ENCODE measurements at regions of chr6 and their contacts with region 1.

Region 1: GRCh38 chr6:131911951-131912350 is 39.2 kb downstream of the CCN2 start:
- DNase-seq: no peak
- H3K4me3 ChIP-seq: no peak overlapping the region
- H3K27ac ChIP-seq: no peak overlapping the region
- H3K4me1 ChIP-seq: no peaks in the 10 kb centered on the region
- H3K27me3 ChIP-seq: no peaks in the 10 kb centered on the region
- CTCF ChIP-seq: no peak
- POLR2A ChIP-seq: no peak

Region 2: GRCh38 chr6:131937703-131938631 is 26.0 kb after region 1 on chr6:
- intact Hi-C with region 1: loop called (anchors 2 kb)
- DNase-seq: no peak
- H3K4me3 ChIP-seq: no peak overlapping the region
- H3K27ac ChIP-seq: peak overlapping the region; percentile 3 to 49
- H3K4me1 ChIP-seq: no peaks in the 10 kb centered on the region
- H3K27me3 ChIP-seq: no peaks in the 10 kb centered on the region
- CTCF ChIP-seq: no peak
- POLR2A ChIP-seq: no peak